ENCODE measurements at regions of chr3 and their contacts with region 1.

Region 1: GRCh38 chr3:111577794-111578685 is 17.1 kb downstream of the ZBED2 start:
- DNase-seq: peak; percentile 79 to 83
- ATAC-seq: peak; percentile 92
- H3K4me3 ChIP-seq: no peak overlapping the region
- H3K27ac ChIP-seq: peak overlapping the region; percentile 50 to 73; a peak in 5 of 6 replicates
- H3K4me1 ChIP-seq: peaks cover 46% of the 10 kb centered on the region
- CTCF ChIP-seq: peak; percentile 81
- EP300 ChIP-seq: no peak
- POLR2A ChIP-seq: no peak
- RAD21 ChIP-seq: peak; percentile 92 to 93

Region 2: GRCh38 chr3:111594205-111594604 is 16.2 kb after region 1 on chr3:
- CTCF ChIA-PET with region 1: interaction called, 24 read pairs
- POLR2A ChIA-PET with region 1: no interaction called
- DNase-seq: peak in 1 of 2 experiments; percentile 40
- ATAC-seq: peak; percentile 67 to 75; a peak in 5 of 6 replicates
- H3K4me3 ChIP-seq: no peak overlapping the region
- H3K27ac ChIP-seq: peak overlapping the region; percentile 67 to 80
- H3K4me1 ChIP-seq: peaks cover 67% of the 10 kb centered on the region
- CTCF ChIP-seq: no peak
- EP300 ChIP-seq: no peak
- POLR2A ChIP-seq: no peak
- RAD21 ChIP-seq: no peak

Region 3: GRCh38 chr3:111668912-111669488 is 91.0 kb after region 1 on chr3:
- CTCF ChIA-PET with region 1: interaction called, 10 read pairs
- POLR2A ChIA-PET with region 1: no interaction called
- DNase-seq: peak; percentile 55 to 72
- ATAC-seq: peak; percentile 76 to 90
- H3K4me3 ChIP-seq: no peak overlapping the region
- H3K27ac ChIP-seq: peak overlapping the region; percentile 43 to 64; a peak in 5 of 6 replicates
- H3K4me1 ChIP-seq: peaks cover 37% of the 10 kb centered on the region
- CTCF ChIP-seq: peak; percentile 86
- EP300 ChIP-seq: no peak
- POLR2A ChIP-seq: no peak
- RAD21 ChIP-seq: peak; percentile 91

Region 4: GRCh38 chr3:111691293-111691909 is 113.4 kb after region 1 on chr3:
- CTCF ChIA-PET with region 1: interaction called, 112 read pairs
- POLR2A ChIA-PET with region 1: interaction called, 8 read pairs
- DNase-seq: peak; percentile 40 to 59
- ATAC-seq: peak; percentile 79 to 84; a peak in 5 of 6 replicates
- H3K4me3 ChIP-seq: no peak overlapping the region
- H3K27ac ChIP-seq: peak overlapping the region in 1 of 2 experiments; percentile 57; a peak in 1 of 6 replicates
- H3K4me1 ChIP-seq: peaks cover 68% of the 10 kb centered on the region
- CTCF ChIP-seq: peak; percentile 83
- EP300 ChIP-seq: no peak
- POLR2A ChIP-seq: no peak
- RAD21 ChIP-seq: peak; percentile 76 to 82

Region 5: GRCh38 chr3:111708157-111708771 is 130.2 kb after region 1 on chr3:
- CTCF ChIA-PET with region 1: interaction called, 70 read pairs
- POLR2A ChIA-PET with region 1: no interaction called
- DNase-seq: no peak
- ATAC-seq: no peak
- H3K4me3 ChIP-seq: no peak overlapping the region
- H3K27ac ChIP-seq: no peak overlapping the region
- H3K4me1 ChIP-seq: no peaks in the 10 kb centered on the region
- CTCF ChIP-seq: no peak
- EP300 ChIP-seq: no peak
- POLR2A ChIP-seq: no peak
- RAD21 ChIP-seq: no peak

Measured in A549 (cell line).